SK-N-SH (cell line): ENCODE measurements at regions of chr9 and their contacts with region 1.

Region 1: DNA sequence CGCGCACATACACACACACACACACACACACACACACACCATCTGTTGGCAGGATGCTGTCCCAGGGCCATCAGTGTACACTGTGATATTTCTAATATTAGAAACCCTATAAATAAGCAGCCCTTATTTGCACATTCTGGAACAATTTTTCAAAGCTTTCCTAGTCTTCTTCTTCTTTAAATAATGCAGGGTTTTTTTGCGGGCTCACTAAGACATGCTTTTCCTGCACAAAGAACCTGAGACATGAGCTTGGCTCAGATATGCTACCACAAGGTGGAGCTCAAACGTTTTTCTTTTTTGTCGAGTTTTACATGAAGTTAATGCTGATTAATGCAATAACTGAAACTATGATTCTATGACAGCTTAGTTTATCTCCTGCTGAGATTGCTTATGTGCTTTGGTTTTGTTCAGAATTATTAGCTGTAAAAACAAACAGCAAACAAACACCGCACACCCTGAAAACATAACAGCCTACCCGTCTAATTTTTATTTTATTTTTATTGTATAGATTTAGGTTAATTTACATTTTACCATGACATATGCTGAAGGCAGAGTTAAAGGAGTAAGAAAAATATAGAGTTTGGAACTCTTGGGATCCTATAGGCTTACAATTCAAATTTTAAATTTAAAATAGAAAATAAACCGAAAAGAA is 95.8 kb downstream of the ALDH1A1 start:
- DNase-seq: peak; percentile 18
- H3K4me3 ChIP-seq: no peak overlapping the region
- H3K27ac ChIP-seq: no peak overlapping the region
- H3K4me1 ChIP-seq: no peaks in the 10 kb centered on the region
- H3K27me3 ChIP-seq: peaks cover 11% of the 10 kb centered on the region; the same call in 1 of the 2 replicates
- CTCF ChIP-seq: peak; percentile 72
- EP300 ChIP-seq: no peak
- RAD21 ChIP-seq: peak; percentile 54

Region 2: GRCh38 chr9:72826996-72827949 is 29.8 kb before region 1 on chr9:
- CTCF ChIA-PET with region 1: no interaction called
- POLR2A ChIA-PET with region 1: no interaction called
- DNase-seq: no peak
- H3K4me3 ChIP-seq: no peak overlapping the region
- H3K27ac ChIP-seq: no peak overlapping the region
- H3K4me1 ChIP-seq: no peaks in the 10 kb centered on the region
- H3K27me3 ChIP-seq: peaks cover 10% of the 10 kb centered on the region; the same call in 1 of the 2 replicates
- CTCF ChIP-seq: no peak
- EP300 ChIP-seq: no peak
- RAD21 ChIP-seq: no peak

Region 3: DNA sequence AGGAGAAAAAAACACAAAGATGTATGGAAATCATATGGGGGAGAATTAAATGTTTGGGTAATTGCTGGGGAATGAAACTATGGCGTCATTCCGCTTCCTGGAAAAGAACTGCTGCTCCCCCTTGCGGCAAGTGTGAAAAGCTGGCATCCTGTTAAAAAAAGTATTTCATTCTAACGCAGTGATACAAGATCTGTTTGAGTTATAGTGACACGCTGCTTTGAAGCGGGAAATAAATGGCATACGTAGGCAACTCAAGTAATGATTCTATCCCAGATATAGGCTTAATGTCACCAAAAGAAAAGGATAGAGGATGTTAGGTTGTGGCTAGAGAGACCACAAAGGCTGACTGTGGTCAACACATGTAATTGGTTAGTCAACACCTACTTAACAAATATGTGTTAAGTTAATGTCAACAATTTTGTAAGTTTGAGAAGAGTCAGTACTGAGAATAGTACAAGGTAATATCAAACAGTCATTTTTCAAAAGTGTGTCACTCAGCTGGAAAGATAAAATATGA is 166.0 kb after region 1 on chr9:
- CTCF ChIA-PET with region 1: interaction called, 11 read pairs
- POLR2A ChIA-PET with region 1: no interaction called
- DNase-seq: peak; percentile 15
- H3K4me3 ChIP-seq: no peak overlapping the region
- H3K27ac ChIP-seq: no peak overlapping the region
- H3K4me1 ChIP-seq: no peaks in the 10 kb centered on the region
- H3K27me3 ChIP-seq: peaks cover 7% of the 10 kb centered on the region; the same call in 1 of the 2 replicates
- CTCF ChIP-seq: peak; percentile 90
- EP300 ChIP-seq: no peak
- RAD21 ChIP-seq: peak; percentile 65

Region 4: GRCh38 chr9:73081979-73082657 is 225.0 kb after region 1 on chr9:
- CTCF ChIA-PET with region 1: interaction called, 10 read pairs
- POLR2A ChIA-PET with region 1: no interaction called
- DNase-seq: peak; percentile 23
- H3K4me3 ChIP-seq: no peak overlapping the region; a peak in 1 of 4 replicates
- H3K27ac ChIP-seq: no peak overlapping the region
- H3K4me1 ChIP-seq: no peaks in the 10 kb centered on the region
- H3K27me3 ChIP-seq: peaks cover 39% of the 10 kb centered on the region
- CTCF ChIP-seq: peak; percentile 81
- EP300 ChIP-seq: no peak
- RAD21 ChIP-seq: peak; percentile 62